GM12878 (cell line): ENCODE measurements at regions of chr7 and their contacts with region 1.

Region 1: GRCh38 chr7:46352004-46352954 is 431.2 kb upstream of the IGFBP3 start:
- DNase-seq: peak; percentile 35
- ATAC-seq: peak; percentile 82
- H3K4me3 ChIP-seq: no peak overlapping the region
- H3K27ac ChIP-seq: no peak overlapping the region
- H3K4me1 ChIP-seq: no peaks in the 10 kb centered on the region
- H3K27me3 ChIP-seq: no peaks in the 10 kb centered on the region
- CTCF ChIP-seq: peak; percentile 51 to 88 (median 62)
- EP300 ChIP-seq: no peak
- POLR2A ChIP-seq: no peak
- RAD21 ChIP-seq: peak; percentile 93

Region 2: GRCh38 chr7:45917658-45918057 is 434.6 kb before region 1 on chr7:
- CTCF ChIA-PET with region 1: interaction called, 127 read pairs
- POLR2A ChIA-PET with region 1: no interaction called
- RAD21 ChIA-PET with region 1: interaction called, 97 read pairs
- SMC1A ChIA-PET with region 1: interaction called, 130 read pairs
- in situ Hi-C with region 1: loop called (anchors 5 kb)
- intact Hi-C with region 1: loop called (anchors 1 kb)
- DNase-seq: no peak
- ATAC-seq: peak; percentile 81
- H3K4me3 ChIP-seq: no peak overlapping the region
- H3K27ac ChIP-seq: no peak overlapping the region
- H3K4me1 ChIP-seq: no peaks in the 10 kb centered on the region
- H3K27me3 ChIP-seq: peaks cover 2 to 3% of the 10 kb centered on the region in 2 experiments; a peak in 3 of 4 replicates
- CTCF ChIP-seq: peak; percentile 87 to 93 (median 89); a peak in 5 of 6 replicates
- EP300 ChIP-seq: no peak
- POLR2A ChIP-seq: no peak
- RAD21 ChIP-seq: peak; percentile 84

Region 3: DNA sequence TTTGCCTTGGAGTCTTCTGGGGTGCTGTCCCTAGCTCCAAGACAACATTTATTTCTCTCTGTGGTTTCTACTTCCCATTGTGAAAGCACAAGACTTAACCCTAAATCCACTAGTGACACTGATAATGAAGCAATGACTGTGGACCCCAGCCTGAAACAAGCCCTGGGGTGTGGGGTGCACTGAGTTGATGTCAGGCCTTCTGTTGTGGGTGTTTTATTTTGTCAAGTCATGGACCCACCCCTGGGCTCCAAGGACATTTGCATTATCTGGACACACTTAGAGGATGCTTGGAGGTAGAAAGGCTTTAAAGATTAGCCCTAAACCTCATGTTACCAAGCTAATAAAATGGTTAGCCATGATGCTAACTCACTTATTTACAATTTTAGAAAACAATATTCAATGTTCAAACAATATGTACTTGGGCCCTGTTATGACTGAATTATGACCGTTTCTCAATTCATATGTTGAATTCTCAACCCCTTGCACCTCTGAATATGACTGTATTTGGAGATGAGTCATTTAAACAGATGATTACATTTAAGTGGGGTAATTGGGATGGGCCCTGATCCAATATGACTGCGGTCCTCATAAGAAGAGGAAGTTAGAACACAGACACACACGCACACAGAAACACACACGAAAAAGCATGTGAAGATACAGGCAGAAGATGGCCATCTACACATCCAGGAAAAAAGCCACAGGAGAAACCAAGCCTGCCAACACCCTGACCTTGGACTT is 294.0 kb before region 1 on chr7:
- CTCF ChIA-PET with region 1: no interaction called
- POLR2A ChIA-PET with region 1: interaction called, 4 read pairs
- RAD21 ChIA-PET with region 1: interaction called, 3 read pairs
- SMC1A ChIA-PET with region 1: interaction called, 3 read pairs
- in situ Hi-C with region 1: no loop called
- intact Hi-C with region 1: loop called (anchors 5 kb)
- DNase-seq: no peak
- ATAC-seq: peak; percentile 85
- H3K4me3 ChIP-seq: no peak overlapping the region
- H3K27ac ChIP-seq: no peak overlapping the region
- H3K4me1 ChIP-seq: no peaks in the 10 kb centered on the region
- H3K27me3 ChIP-seq: no peaks in the 10 kb centered on the region
- CTCF ChIP-seq: no peak
- EP300 ChIP-seq: peak; percentile 77 to 82; a peak in 3 of 4 replicates
- POLR2A ChIP-seq: no peak
- RAD21 ChIP-seq: no peak

Region 4: DNA sequence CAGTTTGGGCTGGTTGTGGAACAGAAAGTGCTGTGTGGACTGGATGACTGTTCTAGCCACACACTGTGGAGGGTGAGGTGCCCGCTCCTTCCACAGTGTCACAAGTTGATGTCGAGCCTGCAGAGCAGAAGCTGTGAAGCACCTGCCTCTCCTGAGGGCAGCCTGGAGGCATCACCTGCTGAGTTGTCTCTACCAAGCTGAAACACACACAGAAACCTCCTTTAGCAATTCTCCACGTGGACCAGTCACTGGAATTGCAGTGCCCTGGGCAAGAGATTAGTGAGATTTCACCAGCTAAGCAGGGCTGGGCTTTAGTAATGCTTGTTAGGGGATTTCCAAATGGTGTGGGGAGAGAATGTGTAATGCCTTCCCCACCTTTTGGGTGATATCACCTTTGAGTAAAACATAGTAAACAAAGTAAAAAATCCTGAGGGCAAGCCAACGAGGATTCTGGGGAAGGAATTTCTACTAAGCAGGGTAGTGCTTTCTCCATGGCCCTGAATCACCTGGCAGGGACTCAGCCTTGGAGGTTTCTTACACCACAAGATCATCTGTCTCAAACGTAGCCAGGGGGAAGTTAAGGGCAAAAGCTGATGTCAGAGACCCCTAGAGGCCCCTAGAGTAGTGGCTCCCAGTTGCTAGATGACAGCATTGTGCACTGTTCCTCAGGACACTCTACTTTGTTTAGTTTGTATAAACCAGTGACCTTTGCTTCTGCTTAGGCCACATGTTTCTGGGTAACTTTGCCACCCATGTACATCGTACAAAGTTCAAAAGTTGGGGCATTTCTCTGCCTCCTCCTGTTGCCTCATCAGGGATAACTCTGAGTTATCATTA is 198.1 kb before region 1 on chr7:
- CTCF ChIA-PET with region 1: interaction called, 5 read pairs
- POLR2A ChIA-PET with region 1: no interaction called
- RAD21 ChIA-PET with region 1: interaction called, 6 read pairs
- SMC1A ChIA-PET with region 1: interaction called, 3 read pairs
- in situ Hi-C with region 1: no loop called
- intact Hi-C with region 1: loop called (anchors 5 kb)
- DNase-seq: peak; percentile 55
- ATAC-seq: peak; percentile 91
- H3K4me3 ChIP-seq: no peak overlapping the region
- H3K27ac ChIP-seq: peak overlapping the region; percentile 4
- H3K4me1 ChIP-seq: peaks cover 8% of the 10 kb centered on the region
- H3K27me3 ChIP-seq: no peaks in the 10 kb centered on the region
- CTCF ChIP-seq: peak in 1 of 3 experiments; percentile 12; a peak in 1 of 6 replicates
- EP300 ChIP-seq: peak in 1 of 2 experiments; percentile 19; a peak in 1 of 4 replicates
- POLR2A ChIP-seq: no peak
- RAD21 ChIP-seq: 0 out of 2 replicates have a peak, but pooled peaks have one; percentile 16

Region 5: GRCh38 chr7:47179812-47180515 is 827.7 kb after region 1 on chr7:
- CTCF ChIA-PET with region 1: no interaction called
- POLR2A ChIA-PET with region 1: no interaction called
- RAD21 ChIA-PET with region 1: no interaction called
- SMC1A ChIA-PET with region 1: no interaction called
- in situ Hi-C with region 1: no loop called
- intact Hi-C with region 1: loop called (anchors 5 kb)
- DNase-seq: no peak
- ATAC-seq: peak; percentile 87
- H3K4me3 ChIP-seq: no peak overlapping the region
- H3K27ac ChIP-seq: no peak overlapping the region
- H3K4me1 ChIP-seq: no peaks in the 10 kb centered on the region
- H3K27me3 ChIP-seq: no peaks in the 10 kb centered on the region
- CTCF ChIP-seq: peak; percentile 55 to 80 (median 58)
- EP300 ChIP-seq: no peak
- POLR2A ChIP-seq: no peak
- RAD21 ChIP-seq: peak; percentile 71